CD14-positive monocyte (primary cell): ENCODE measurements at regions of chr7 and their contacts with region 1.

Region 1: DNA sequence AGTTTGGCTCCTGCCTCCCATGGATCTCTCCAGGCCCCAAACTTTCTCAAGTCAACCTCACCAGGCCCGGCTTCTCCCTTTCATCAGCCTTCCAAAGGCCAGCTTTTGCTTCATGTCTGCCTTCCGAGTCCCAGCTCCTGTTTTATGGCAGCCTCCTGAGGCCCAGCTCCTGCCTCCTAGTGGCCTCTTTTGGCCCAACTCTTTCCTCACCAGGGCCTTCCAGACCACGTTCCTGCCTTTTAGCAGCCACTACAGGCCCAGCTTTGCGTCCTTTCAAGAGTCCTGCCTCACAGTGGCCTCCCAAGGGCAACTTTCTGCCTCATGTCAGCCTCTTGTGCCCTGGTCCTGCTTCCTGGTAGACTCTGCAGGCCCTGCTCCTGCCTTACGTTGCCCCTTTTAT is 15.3 kb upstream of the TMEM248 start:
- DNase-seq: no peak
- H3K4me3 ChIP-seq: no peak overlapping the region
- H3K4me3 Mint-ChIP-seq: no peak overlapping the region
- H3K27ac ChIP-seq: no peak overlapping the region
- H3K27ac Mint-ChIP-seq: peak overlapping the region in 3 of 7 donors; percentile 18 to 69 (median 44)
- H3K4me1 ChIP-seq: no peaks in the 10 kb centered on the region
- H3K4me1 Mint-ChIP-seq: no peaks in the 10 kb centered on the region
- H3K27me3 ChIP-seq: no peaks in the 10 kb centered on the region
- H3K27me3 Mint-ChIP-seq: peaks cover 0 to 2% (median 0%) of the 10 kb centered on the region in 3 donors
- CTCF ChIP-seq: no peak

Region 2: DNA sequence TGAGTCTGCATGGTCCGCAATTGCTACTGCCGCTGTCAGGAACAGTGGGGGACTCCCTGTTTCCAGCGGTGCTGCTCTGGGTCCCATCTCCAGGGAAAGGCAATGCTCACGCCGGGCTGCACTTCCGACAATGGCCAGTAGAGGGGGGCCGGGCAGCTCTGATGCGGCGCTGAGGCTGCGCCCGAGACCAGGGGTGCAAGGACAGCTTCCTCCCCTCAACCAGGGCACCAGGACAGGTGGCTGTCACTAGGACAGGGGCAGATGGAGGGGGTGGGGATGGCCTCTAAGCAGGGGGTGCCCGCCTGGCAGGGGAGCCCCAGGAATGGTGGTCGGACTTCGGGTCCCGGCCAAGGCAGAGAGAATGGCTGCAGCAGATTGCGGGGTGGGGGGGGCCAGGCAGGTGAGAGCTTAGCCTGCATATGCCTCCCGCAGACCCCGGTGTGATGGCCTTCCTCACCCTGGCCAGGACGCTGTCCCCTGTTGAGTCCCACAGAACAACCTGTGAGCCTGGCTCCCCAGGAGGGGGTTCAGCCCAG is 348.0 kb before region 1 on chr7:
- intact Hi-C with region 1: no loop called
- DNase-seq: peak; percentile 35 to 54 (median 45)
- H3K4me3 ChIP-seq: no peak overlapping the region
- H3K4me3 Mint-ChIP-seq: no peak overlapping the region
- H3K27ac ChIP-seq: no peak overlapping the region
- H3K27ac Mint-ChIP-seq: no peak overlapping the region
- H3K4me1 ChIP-seq: no peaks in the 10 kb centered on the region
- H3K4me1 Mint-ChIP-seq: no peaks in the 10 kb centered on the region
- H3K27me3 ChIP-seq: no peaks in the 10 kb centered on the region
- H3K27me3 Mint-ChIP-seq: peaks cover 0 to 3% (median 0%) of the 10 kb centered on the region in 3 donors
- CTCF ChIP-seq: peak; percentile 96

Region 3: GRCh38 chr7:66832531-66833351 is 72.9 kb before region 1 on chr7:
- intact Hi-C with region 1: loop called in 1 of 2 experiments (anchors 5 kb)
- DNase-seq: no peak
- H3K4me3 ChIP-seq: no peak overlapping the region
- H3K4me3 Mint-ChIP-seq: no peak overlapping the region
- H3K27ac ChIP-seq: no peak overlapping the region
- H3K27ac Mint-ChIP-seq: no peak overlapping the region
- H3K4me1 ChIP-seq: no peaks in the 10 kb centered on the region
- H3K4me1 Mint-ChIP-seq: no peaks in the 10 kb centered on the region
- H3K27me3 ChIP-seq: no peaks in the 10 kb centered on the region
- H3K27me3 Mint-ChIP-seq: peaks cover 3 to 6% (median 5%) of the 10 kb centered on the region in 3 donors
- CTCF ChIP-seq: no peak